ENCODE measurements at regions of chr11 and their contacts with region 1.

Region 1: DNA sequence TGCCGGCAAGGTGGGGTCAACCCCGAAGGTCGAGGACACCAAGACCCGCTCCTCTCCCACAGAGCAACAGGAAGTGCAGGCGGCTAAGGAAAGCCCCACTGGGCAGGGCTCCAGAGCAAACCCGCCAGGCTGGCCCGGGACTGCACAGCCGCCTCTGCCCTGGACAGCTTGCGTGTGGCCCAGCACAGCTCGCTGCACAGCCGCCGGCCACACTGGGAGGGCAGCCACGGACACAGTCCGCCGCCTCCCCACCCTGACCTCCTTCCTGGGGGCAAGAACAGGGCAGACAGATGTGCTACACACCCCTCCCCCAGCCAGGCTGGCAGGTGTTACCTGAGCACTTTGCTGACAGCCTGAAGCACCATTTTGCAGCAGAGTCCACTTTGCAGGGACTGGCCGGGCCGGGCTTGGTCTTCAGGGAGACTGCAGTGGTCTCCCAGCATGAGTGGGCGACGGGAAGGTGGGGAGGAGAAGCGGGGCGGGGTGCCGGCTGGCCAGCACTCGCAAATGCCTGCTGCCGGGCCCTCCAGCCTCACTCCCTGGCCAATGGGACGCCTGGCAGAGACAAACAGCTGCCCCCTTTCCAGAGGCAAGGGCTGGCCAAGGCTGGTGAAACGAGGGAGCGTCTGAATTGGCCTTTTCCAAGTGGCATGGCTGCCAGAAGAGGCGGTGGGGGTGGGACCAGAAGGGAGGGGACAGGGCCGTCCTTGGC is at the start of gene MOB2:
- DNase-seq: no peak
- ATAC-seq: peak; percentile 21
- H3K4me3 Mint-ChIP-seq: peak within 1 kb of the TSS; percentile 41
- H3K27ac Mint-ChIP-seq: no peak within 1 kb of the TSS
- H3K4me1 Mint-ChIP-seq: peaks cover 38% of the 10 kb centered on the region
- H3K27me3 Mint-ChIP-seq: no peaks in the 10 kb centered on the region
- CTCF ChIP-seq: no peak
- total RNA-seq, gene MOB2: 29.5 and 34.4 TPM in 2 replicates

Region 2: DNA sequence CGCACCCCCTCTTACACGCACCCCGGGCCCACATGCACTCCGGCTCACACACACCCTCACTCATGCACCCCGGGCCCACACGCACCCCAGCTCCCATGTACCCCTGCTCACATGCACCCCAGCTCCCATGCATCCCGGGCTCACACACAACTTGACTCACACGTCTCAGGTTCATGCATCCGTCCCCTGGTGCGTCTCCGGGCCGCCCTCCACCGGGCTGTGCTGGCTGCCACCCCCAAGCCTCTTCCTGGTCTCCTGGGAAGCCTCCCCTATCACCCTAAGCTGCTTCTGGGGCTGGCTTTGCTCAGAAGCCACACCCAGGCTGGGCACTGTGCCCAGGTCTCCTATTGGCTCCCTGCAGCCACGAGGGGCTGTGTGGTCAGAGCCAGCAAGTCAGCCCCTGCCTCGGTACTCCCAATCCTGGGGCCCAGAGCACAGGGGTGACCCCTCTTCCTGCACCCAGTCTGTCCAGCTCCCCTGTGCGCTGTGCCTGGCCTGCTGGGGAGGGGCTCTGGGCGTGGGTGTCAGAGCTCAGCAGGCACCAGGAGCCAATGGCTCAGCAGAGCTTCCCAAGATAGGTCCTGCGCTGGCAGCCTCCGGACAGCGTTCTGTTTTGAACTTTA is 626.6 kb before region 1 on chr11:
- CTCF ChIA-PET with region 1: no interaction called
- POLR2A ChIA-PET with region 1: interaction called, 3 read pairs
- intact Hi-C with region 1: loop called (anchors 10 kb)
- DNase-seq: no peak
- ATAC-seq: no peak
- H3K4me3 Mint-ChIP-seq: no peak overlapping the region
- H3K27ac Mint-ChIP-seq: no peak overlapping the region
- H3K4me1 Mint-ChIP-seq: no peaks in the 10 kb centered on the region
- H3K27me3 Mint-ChIP-seq: no peaks in the 10 kb centered on the region
- CTCF ChIP-seq: no peak

Region 3: DNA sequence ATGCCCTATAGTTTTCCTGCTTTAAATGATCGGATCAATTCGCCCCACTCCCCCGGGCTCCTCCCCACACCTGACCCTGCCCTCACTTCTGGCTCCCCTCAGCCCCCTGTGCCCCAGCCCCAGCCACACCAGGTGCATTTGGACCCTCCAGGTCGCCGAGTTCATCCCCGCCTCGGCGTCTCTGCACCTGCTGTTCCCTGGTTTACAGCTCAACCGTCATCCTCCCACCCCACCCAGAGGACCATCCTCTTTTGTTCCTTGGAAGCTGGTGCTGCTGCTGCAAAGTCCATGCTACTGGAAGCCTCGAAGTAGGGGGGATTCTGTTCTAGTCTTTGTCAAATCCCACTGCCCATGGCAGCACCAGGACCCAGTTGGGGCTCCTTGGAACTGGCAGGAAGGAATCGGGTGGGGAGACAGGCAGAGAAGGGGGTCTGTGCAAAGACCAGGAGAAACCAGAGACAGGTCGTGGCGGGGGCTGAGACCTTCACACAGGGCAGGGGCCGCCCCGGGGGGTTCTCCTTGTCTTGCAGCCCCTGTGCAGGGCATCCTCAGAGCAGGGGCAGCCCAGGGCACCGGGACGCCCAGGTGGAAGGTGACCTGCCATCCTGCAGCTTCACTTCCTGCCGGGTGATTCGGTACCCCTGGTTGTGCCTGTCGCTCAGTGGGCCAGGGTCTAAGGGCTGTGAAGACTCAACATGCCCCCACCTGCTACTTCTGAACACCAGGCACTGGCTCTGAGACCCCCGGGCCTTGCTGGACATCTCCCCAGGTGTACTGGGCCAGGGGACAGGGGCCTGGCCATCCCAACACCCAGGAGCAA is 267.8 kb before region 1 on chr11:
- CTCF ChIA-PET with region 1: no interaction called
- POLR2A ChIA-PET with region 1: no interaction called
- intact Hi-C with region 1: no loop called
- DNase-seq: no peak
- ATAC-seq: no peak
- H3K4me3 Mint-ChIP-seq: no peak overlapping the region
- H3K27ac Mint-ChIP-seq: no peak overlapping the region
- H3K4me1 Mint-ChIP-seq: no peaks in the 10 kb centered on the region
- H3K27me3 Mint-ChIP-seq: peaks cover 9% of the 10 kb centered on the region
- CTCF ChIP-seq: no peak

Region 4: DNA sequence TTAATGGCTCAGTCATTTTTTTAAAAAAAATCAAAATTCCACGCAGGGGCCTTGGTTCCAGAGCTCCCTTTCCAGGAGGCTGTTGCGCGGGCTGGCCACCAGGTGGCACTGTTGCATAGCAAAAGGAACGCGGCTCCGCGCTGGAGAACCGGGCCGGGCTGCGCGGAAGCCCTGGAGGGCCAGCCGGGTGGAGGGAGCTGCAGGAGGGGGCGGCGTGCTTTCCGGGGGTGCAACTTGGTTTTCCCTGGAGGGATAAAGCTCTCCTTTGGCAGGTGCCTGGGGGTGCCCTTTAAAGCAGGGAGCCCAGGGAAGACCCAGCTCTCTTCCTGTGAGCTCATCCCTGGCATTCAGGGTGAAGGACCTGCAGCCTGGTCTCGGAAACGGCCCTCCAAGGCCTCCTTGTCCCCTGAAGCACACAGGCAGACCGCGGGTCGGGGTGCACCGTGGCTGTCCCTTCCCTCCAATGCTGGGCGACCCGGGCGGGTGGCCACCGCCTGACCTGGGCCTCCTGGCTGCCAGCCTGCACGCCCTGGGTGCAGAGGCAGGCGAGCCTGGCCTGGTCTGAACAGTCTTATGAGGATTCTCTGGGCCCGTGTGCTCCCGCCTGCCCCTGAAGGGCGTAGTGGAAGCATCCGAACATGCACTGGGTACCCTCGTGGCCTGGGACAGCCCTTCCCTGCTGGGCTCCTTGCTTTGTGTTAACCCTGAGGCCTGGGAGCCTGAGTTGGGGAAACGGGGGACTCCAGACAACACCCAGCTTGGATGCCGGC is 166.7 kb after region 1 on chr11:
- CTCF ChIA-PET with region 1: no interaction called
- POLR2A ChIA-PET with region 1: no interaction called
- intact Hi-C with region 1: no loop called
- DNase-seq: peak; percentile 74
- ATAC-seq: peak; percentile 91
- H3K4me3 Mint-ChIP-seq: no peak overlapping the region
- H3K27ac Mint-ChIP-seq: no peak overlapping the region
- H3K4me1 Mint-ChIP-seq: no peaks in the 10 kb centered on the region
- H3K27me3 Mint-ChIP-seq: peaks cover 24% of the 10 kb centered on the region
- CTCF ChIP-seq: peak; percentile 80

Measured in activated B cell treated with CpG ODN at 0.5 μM for 24 hours (primary cell).